Panc1 (cell line): ENCODE measurements at regions of chr16 and their contacts with region 1.

Region 1: DNA sequence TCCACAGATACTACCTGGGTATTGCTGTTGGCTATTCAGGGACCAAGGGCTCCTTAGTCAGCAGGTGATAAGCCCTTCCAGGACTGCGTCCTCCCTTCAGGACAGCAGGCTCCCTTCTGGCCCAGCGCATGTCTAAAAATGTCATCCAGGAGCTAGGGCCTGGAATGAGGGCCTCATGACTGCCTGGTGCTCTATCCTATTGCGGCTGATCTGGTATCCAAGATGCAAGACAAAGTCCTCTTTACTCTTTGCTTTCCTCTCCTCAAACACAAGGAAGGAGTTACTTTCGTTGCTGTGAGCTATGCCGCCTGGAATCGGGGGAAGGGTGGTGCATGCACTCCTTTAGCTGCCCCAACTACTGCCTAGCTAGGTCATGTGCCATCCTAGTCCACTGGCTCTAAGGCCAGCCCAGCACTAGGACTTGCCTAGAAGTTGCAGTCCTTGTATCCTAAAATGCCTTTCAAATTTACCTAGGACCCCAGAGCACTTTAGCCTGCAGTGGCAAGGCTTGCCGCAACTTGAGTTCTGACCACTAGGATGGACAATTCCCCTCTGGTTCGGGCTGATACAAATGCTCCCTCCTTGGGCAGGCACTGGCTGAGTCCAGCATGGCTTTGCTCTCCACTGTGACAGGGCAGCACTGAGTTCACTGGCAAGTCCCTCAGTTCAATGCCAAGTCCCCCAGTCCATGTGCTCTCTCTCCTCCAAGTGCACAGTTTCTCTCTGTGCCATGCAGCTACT is 10.1 kb upstream of the TMEM219 start:
- DNase-seq: no peak
- ATAC-seq: peak; percentile 68
- H3K4me3 ChIP-seq: no peak overlapping the region
- H3K27ac ChIP-seq: peak overlapping the region; percentile 21; the same call in 1 of the 2 replicates
- H3K4me1 ChIP-seq: no peaks in the 10 kb centered on the region
- H3K27me3 ChIP-seq: no peaks in the 10 kb centered on the region
- CTCF ChIP-seq: no peak

Region 2: DNA sequence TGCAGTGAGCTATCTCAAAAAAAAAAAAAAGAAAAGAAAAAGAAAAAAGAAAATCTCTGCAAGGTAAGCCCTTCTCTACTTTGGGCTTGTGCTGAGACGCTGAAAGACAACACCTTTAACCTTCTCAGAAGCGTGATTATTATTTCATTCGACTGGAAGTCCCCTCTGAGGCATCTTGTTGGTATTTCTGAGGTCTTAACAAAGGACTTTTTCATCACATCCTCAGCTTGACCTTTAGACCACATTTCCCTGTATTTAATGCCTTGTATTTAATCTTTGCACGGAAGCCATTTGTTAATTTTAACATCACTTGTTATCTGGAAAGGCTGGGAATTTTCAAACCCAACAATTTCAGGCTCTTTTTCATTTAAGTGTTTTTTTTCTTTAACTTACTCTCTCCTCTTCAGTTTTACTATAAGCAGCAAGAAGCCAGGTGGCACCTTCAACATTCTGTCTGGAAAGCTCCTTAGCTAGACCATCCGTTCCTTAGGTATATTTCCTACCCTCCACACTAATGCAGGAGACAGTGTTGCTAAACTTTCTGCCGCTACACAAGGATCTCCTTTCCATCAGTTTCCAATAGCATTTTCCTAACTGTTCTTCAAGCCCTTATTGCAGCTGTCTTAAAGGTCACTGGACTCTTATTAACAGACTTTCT is 36.1 kb before region 1 on chr16:
- CTCF ChIA-PET with region 1: interaction called, 12 read pairs
- POLR2A ChIA-PET with region 1: no interaction called
- in situ Hi-C with region 1: no loop called
- intact Hi-C with region 1: no loop called
- DNase-seq: no peak
- ATAC-seq: no peak
- H3K4me3 ChIP-seq: no peak overlapping the region
- H3K27ac ChIP-seq: no peak overlapping the region
- H3K4me1 ChIP-seq: no peaks in the 10 kb centered on the region
- H3K27me3 ChIP-seq: no peaks in the 10 kb centered on the region
- CTCF ChIP-seq: no peak

Region 3: DNA sequence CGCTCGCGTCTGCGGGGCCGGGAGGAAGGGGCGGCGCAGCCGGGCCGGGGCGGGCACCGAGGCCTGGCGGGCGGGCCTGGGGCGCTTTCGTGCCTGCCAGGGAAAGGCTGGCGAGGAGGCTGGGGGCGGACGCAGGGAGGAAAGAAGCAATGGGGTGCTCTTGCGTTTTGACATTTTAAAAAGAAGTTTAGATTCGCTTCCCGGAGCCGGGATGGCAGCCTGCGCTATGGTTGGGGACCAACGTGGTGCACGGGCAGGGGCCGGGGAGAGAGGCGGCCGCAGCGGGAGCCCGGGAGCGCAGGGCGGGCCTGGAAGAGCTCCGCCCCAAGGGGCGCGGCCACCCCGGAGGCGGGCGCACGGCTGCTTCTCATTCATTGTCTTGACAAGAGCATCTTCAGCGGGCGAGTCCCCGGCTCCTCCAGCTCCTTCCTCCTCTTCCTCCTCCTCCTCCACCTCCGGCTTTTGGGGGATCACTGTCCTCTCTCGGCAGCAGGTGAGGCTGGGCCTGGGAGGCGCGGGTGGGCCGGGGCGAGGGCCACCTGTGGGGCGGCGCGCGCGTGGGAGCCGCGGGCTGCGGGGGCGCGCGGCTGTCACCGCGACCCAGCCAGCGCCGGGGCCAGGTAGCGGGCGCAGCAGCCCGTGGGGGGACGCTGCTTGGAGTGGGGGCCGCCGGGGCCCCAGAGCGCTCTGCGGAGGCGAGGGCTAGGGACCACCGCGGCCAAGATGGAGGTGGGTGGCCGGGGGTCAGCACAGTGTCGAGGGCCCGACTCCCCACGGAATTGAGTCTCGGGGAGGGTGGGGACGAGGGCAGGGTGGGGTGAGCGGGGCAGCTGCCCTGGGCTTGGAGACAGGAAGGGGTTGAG is 231.7 kb after region 1 on chr16 and contains the start of gene CORO1A:
- CTCF ChIA-PET with region 1: no interaction called
- POLR2A ChIA-PET with region 1: no interaction called
- in situ Hi-C with region 1: no loop called
- intact Hi-C with region 1: no loop called
- DNase-seq: peak; percentile 7
- ATAC-seq: peak; percentile 89
- H3K4me3 ChIP-seq: peak within 1 kb of the TSS; percentile 56 to 62
- H3K27ac ChIP-seq: peak within 1 kb of the TSS; percentile 44
- H3K4me1 ChIP-seq: peaks cover 6% of the 10 kb centered on the region
- H3K27me3 ChIP-seq: no peaks in the 10 kb centered on the region
- CTCF ChIP-seq: no peak
- total RNA-seq, gene CORO1A: 3.7 TPM

Region 4: DNA sequence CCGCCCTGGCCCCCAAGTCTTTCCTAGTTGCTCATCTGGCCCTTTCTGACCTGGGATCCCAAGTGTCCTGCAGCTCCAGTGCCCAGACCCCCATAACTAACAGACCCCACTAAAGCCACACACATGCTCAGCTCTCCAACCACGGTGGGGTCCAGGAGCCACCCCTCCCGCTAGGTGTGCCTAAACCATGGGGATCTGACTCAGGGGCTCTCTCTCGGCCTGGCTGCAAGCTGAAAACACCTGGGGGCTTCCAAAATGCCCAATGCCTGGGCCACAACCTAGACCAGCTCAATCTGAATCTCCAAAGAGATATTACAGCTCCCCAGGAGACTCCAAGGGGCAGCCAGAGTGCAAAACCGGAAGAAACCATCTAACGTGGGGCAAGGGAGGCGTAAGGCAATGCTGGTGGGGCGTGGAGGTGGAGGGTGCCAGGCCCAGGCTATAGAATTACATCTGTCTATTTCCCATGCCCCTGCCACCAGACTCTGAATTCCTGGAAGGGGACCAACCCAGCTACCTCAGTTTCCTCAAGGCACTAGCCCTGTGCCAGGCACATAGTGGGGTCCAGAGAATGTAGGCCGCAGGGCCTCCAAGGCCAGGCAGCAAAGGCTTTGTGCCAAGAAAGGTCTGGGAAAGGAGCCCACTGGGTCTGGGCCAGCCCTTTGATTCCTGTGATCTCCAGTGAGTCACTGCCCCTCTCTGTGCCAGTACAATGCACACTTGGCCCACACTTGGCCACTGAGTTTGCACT is 400.0 kb after region 1 on chr16:
- CTCF ChIA-PET with region 1: no interaction called
- POLR2A ChIA-PET with region 1: no interaction called
- in situ Hi-C with region 1: no loop called
- intact Hi-C with region 1: no loop called
- DNase-seq: no peak
- ATAC-seq: no peak
- H3K4me3 ChIP-seq: no peak overlapping the region
- H3K27ac ChIP-seq: peak overlapping the region; percentile 68; the same call in 1 of the 2 replicates
- H3K4me1 ChIP-seq: peaks cover 43% of the 10 kb centered on the region
- H3K27me3 ChIP-seq: no peaks in the 10 kb centered on the region
- CTCF ChIP-seq: no peak